ENCODE measurements at regions of chr16 and their contacts with region 1.

Region 1: DNA sequence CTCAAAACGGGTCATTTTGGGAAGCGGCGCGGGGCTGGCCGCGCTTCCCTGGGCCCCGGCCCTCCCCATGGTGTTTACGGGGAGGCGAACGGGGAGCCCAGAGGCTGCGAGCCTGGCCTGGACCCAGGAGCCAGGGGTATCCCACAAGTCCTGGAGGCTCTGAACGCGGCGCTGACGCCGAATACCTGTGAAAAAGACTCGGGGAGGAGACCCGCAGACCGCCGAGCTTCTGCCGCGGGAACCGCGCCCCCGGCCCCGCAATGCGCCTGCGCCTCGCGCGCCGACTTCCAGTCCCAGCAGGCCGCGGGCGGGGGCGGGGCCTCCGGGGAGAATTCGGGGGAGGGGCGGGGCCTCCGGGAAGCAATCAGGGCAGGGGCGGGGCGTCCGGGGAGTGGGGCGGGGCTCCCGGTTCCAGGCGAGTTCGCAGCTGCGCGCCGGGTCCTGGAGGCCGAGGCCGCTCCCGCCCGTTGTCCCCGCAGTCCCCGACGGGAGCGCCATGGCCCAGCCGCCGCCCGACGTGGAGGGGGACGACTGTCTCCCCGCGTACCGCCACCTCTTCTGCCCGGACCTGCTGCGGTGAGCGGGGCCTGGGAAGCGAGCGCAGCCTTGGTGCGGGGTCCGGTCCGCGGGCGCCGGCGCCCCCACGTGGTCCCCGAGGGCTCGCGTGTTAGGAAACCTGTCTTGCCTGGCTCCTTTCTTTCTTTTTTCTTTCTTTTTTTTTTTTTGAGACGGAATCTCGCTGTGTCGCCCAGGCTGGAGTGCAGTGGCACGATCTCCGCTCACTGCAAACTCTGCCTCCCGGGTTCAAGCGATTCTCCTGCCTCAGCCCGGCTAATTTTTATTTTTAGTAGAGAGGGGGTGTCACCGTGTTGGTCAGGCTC is at the start of gene DECR2:
- DNase-seq: peak; percentile 96 to 100 (median 98)
- ATAC-seq: peak; percentile 88
- H3K4me3 ChIP-seq: peak within 1 kb of the TSS; percentile 88 to 91
- H3K4me3 Mint-ChIP-seq: peak within 1 kb of the TSS; percentile 90
- H3K27ac ChIP-seq: peak within 1 kb of the TSS; percentile 75 to 82
- H3K27ac Mint-ChIP-seq: peak within 1 kb of the TSS; percentile 98
- H3K4me1 ChIP-seq: peaks cover 11% of the 10 kb centered on the region
- H3K4me1 Mint-ChIP-seq: peaks cover 13% of the 10 kb centered on the region
- H3K27me3 ChIP-seq: no peaks in the 10 kb centered on the region
- H3K27me3 Mint-ChIP-seq: no peaks in the 10 kb centered on the region
- CTCF ChIP-seq: peak; percentile 55
- total RNA-seq, gene DECR2: 6.1 to 7.9 TPM

Region 2: DNA sequence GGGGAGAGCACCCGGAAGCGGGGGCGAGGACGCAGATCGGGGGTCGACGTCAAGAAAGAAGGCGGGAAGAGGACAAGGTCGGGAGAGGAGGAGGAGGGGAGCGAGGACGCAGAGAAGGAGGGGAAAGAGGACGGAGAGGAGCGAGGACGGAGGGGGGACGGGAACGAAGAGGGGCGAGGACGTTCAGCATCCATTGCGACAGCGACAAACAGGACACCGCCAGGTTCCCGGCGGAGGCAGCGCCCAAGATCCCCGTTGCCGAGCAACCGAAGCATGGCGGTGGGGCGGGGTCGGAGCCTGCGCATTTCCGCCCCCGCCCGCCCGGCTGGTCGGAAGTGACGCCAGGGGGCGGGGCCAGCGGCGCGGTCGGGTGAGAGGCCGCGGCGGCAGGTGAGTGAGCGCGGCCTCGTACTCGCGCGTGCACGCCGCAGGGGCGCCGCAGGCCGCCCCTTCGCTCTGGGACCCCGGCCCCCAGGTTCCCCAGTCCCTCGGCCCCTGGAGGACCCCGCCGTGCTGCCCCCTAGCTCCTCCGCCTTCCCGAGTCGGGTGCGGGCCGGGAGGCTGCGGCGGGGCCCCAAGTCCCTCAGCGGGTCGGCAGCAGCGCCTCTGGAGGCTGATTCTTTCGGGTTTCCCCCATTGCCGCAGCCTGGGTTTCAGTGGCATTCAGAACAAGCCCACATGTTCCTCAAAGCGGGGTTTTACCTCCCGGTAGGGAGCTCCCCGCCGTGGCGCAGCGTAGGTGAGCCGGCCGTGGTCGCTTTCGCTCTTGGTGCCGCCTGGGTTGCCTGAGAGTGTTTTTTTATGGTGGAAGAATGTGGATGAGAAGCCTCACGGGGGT is 167.0 kb before region 1 on chr16 and contains the start of gene FAM234A:
- CTCF ChIA-PET with region 1: no interaction called
- POLR2A ChIA-PET with region 1: interaction called, 3 read pairs
- intact Hi-C with region 1: loop called (anchors 1 kb)
- DNase-seq: peak; percentile 90 to 97 (median 95)
- ATAC-seq: peak; percentile 82
- H3K4me3 ChIP-seq: peak within 1 kb of the TSS; percentile 79 to 94
- H3K4me3 Mint-ChIP-seq: peak within 1 kb of the TSS; percentile 96
- H3K27ac ChIP-seq: peak within 1 kb of the TSS; percentile 99
- H3K27ac Mint-ChIP-seq: peak within 1 kb of the TSS; percentile 99
- H3K4me1 ChIP-seq: peaks cover 17% of the 10 kb centered on the region
- H3K4me1 Mint-ChIP-seq: peaks cover 15% of the 10 kb centered on the region
- H3K27me3 ChIP-seq: no peaks in the 10 kb centered on the region
- H3K27me3 Mint-ChIP-seq: no peaks in the 10 kb centered on the region
- CTCF ChIP-seq: peak; percentile 52
- total RNA-seq, gene FAM234A: 22.4 to 24.7 TPM

Region 3: DNA sequence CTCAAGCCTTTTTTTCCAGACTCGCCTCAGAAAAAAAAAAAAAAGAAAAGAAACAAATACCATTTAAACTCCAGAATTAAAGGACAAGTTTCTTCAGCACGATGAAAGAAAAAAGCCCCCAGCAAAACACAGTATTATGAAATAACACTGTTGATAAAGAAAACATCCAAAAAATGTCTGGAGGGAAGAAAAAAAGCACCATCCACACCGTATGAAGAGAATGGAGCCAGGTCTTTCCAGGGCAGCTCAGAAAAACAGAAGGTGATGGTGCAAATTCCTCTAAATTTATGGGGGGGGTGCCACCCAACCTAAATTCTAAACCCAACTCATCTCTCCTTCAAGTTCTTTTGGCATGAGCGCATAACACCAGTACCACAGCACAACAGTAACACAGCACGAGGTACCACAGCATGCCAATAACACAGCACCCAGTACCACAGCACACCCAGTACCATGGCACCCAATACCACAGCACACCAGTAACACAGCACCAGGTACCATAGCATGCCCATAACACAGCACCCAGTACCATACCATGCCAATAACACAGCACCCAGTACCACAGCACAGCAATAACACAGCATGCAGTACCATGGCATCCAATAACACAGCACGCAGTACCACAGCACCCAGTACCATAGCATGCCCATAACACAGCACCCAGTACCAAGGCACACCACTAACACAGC is 68.2 kb before region 1 on chr16:
- CTCF ChIA-PET with region 1: no interaction called
- POLR2A ChIA-PET with region 1: no interaction called
- intact Hi-C with region 1: no loop called
- DNase-seq: no peak
- ATAC-seq: no peak
- H3K4me3 ChIP-seq: no peak overlapping the region
- H3K4me3 Mint-ChIP-seq: no peak overlapping the region
- H3K27ac ChIP-seq: no peak overlapping the region
- H3K27ac Mint-ChIP-seq: no peak overlapping the region
- H3K4me1 ChIP-seq: peaks cover 51% of the 10 kb centered on the region
- H3K4me1 Mint-ChIP-seq: peaks cover 58% of the 10 kb centered on the region
- H3K27me3 ChIP-seq: no peaks in the 10 kb centered on the region
- H3K27me3 Mint-ChIP-seq: no peaks in the 10 kb centered on the region
- CTCF ChIP-seq: no peak

Region 4: GRCh38 chr16:370443-370842 is 31.3 kb before region 1 on chr16 and contains the start of gene MRPL28:
- CTCF ChIA-PET with region 1: no interaction called
- POLR2A ChIA-PET with region 1: interaction called, 7 read pairs
- intact Hi-C with region 1: loop called (anchors 1 kb)
- DNase-seq: peak; percentile 86 to 97 (median 93)
- ATAC-seq: peak; percentile 99
- H3K4me3 ChIP-seq: peak within 1 kb of the TSS; percentile 15 to 20
- H3K4me3 Mint-ChIP-seq: peak within 1 kb of the TSS; percentile 84
- H3K27ac ChIP-seq: peak within 1 kb of the TSS; percentile 0 to 77
- H3K27ac Mint-ChIP-seq: peak within 1 kb of the TSS; percentile 92
- H3K4me1 ChIP-seq: peaks cover 14% of the 10 kb centered on the region
- H3K4me1 Mint-ChIP-seq: peaks cover 17% of the 10 kb centered on the region
- H3K27me3 ChIP-seq: no peaks in the 10 kb centered on the region
- H3K27me3 Mint-ChIP-seq: no peaks in the 10 kb centered on the region
- CTCF ChIP-seq: no peak
- total RNA-seq, gene MRPL28: 16.7 to 17.4 TPM

Region 5: DNA sequence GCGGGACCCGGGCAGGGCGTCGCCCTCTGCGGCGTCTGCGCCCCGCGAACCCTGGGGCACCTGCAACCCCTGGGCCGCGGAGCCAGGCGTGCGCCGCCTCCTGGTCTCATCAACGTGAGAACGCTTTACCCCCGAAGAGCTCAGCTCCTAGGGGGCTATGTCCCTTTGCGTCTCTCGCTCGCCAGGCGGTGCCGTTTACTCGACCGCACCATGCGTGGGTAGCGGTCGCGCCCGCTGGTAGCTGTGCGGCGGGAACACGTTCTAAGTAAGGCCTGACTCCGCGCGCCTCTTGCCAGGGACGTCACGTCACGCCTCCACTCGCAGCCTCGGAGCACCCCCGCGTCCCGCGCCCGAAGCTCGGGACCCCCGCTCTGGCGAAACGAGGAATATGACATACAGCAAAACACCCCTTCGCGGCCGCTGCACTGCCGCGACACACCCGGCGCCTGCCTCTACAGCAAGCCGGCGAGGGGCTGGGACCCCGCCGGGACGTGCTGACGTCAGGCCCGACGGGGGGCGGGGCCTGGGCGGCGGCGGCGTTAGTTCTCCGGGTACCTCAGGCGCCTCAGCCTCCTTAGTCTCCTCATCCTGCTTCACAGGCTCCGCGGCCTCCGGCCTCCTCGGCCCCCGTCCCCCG is 23.5 kb after region 1 on chr16 and contains the start of gene RAB11FIP3:
- CTCF ChIA-PET with region 1: interaction called, 9 read pairs
- POLR2A ChIA-PET with region 1: interaction called, 3 read pairs
- intact Hi-C with region 1: loop called (anchors 1 kb)
- DNase-seq: peak; percentile 66 to 92 (median 83)
- ATAC-seq: peak; percentile 89
- H3K4me3 ChIP-seq: peak within 1 kb of the TSS; percentile 78 to 86
- H3K4me3 Mint-ChIP-seq: peak within 1 kb of the TSS; percentile 90
- H3K27ac ChIP-seq: peak within 1 kb of the TSS; percentile 81 to 93
- H3K27ac Mint-ChIP-seq: peak within 1 kb of the TSS; percentile 96
- H3K4me1 ChIP-seq: peaks cover 21% of the 10 kb centered on the region
- H3K4me1 Mint-ChIP-seq: peaks cover 36% of the 10 kb centered on the region
- H3K27me3 ChIP-seq: peaks cover 0 to 3% of the 10 kb centered on the region in 2 experiments
- H3K27me3 Mint-ChIP-seq: peaks cover 3% of the 10 kb centered on the region
- CTCF ChIP-seq: peak; percentile 40
- total RNA-seq, gene RAB11FIP3: 26.4 to 27.5 TPM

Region 6: DNA sequence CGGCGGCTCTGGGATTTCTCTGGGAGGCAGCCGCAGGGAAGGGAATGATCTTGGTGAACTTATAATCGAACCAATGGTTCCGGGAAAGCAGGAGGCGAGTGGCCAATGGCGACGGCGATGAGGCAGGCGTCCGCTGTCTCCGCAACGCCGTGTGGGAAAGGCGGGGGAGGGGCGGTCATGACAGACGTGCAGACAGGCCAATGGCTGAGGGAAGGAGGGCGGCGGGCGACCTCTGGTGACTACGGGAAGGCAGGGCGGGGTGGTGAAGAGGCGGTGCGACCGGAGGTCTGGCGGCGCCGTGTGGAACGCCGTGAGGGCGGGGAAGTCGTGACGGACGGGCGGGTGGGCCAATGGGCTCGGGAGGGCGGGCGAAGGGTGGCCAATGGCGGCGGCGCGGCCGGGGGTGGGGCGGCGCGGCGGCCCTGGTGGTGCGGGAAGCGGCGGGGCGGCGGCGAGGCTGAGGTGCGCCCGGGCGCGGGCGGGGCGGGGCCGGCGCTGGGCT is 188.0 kb after region 1 on chr16 and contains the start of gene RAB40C:
- CTCF ChIA-PET with region 1: no interaction called
- POLR2A ChIA-PET with region 1: no interaction called
- intact Hi-C with region 1: loop called in 1 of 2 experiments (anchors 1 kb)
- DNase-seq: peak; percentile 98 to 100 (median 99)
- ATAC-seq: peak; percentile 81
- H3K4me3 ChIP-seq: peak within 1 kb of the TSS; percentile 70 to 98
- H3K4me3 Mint-ChIP-seq: peak within 1 kb of the TSS; percentile 95
- H3K27ac ChIP-seq: peak within 1 kb of the TSS; percentile 84 to 93
- H3K27ac Mint-ChIP-seq: peak within 1 kb of the TSS; percentile 98
- H3K4me1 ChIP-seq: peaks cover 29% of the 10 kb centered on the region
- H3K4me1 Mint-ChIP-seq: peaks cover 40% of the 10 kb centered on the region
- H3K27me3 ChIP-seq: no peaks in the 10 kb centered on the region
- H3K27me3 Mint-ChIP-seq: no peaks in the 10 kb centered on the region
- CTCF ChIP-seq: no peak
- total RNA-seq, gene RAB40C: 3.9 to 5.9 TPM